Activated T-helper 2 cell treated with anti-CD3 and anti-CD28 coated beads, Interferon-gamma antibody, Interleukin-2, Interleukin-4, amounts not matched to agents 10 μg/mL and 5 μg/mL and 100 μg/mL, durations not matched to agents 14 hours and 24 hours and 36 hours (primary cell): ENCODE measurements at regions of chr1 and their contacts with region 1.

Region 1: DNA sequence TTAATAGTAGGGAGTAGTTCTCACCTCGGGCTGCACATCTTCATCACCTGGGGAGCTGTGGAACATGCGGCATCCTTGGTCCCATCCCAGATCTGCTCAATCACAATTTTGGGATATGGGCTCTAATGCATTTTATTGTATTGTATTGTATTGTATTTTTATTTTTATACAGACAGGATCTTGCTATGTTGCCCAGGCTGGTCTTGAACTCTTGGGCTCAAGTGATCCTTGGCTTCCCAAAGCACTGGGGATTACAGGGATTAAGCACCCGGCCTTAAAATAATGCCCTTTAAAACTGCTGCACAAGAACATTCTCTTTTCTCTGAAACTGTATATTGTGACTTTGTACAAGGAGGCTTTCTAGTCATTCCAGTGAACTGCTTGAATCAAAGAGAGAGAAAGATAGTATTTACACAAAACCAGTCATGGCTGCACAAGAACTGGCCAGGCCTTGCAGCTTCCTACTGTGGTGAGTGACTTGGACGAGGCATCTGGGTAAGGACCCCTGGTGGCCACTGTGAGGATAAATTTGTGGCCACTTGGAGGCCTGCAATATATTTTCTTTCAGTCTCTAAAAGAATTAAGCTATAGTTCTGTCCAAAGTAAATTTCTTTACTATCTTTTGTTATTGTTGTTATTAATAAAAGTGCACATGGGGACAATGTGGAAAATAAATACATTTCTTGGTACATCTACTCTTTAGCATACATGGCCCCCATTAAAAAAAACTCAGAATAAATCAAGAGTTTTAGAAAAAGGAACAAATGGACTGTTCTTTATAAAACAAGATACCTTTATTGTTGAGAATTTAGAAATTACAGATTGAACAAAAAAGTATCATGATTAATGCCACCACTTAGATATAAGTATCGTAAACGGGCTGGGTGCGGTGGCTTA is 48.0 kb downstream of the TBCE start:
- DNase-seq: peak; percentile 38
- H3K4me3 Mint-ChIP-seq: no peak overlapping the region
- H3K27ac Mint-ChIP-seq: no peak overlapping the region
- H3K4me1 Mint-ChIP-seq: peaks cover 6% of the 10 kb centered on the region
- H3K27me3 Mint-ChIP-seq: no peaks in the 10 kb centered on the region

Region 2: GRCh38 chr1:235206533-235207208 is 208.6 kb before region 1 on chr1:
- intact Hi-C with region 1: loop called (anchors 2 kb)
- DNase-seq: no peak
- H3K4me3 Mint-ChIP-seq: peak overlapping the region; percentile 26
- H3K27ac Mint-ChIP-seq: peak overlapping the region; percentile 92
- H3K4me1 Mint-ChIP-seq: peaks cover 28% of the 10 kb centered on the region
- H3K27me3 Mint-ChIP-seq: no peaks in the 10 kb centered on the region

Region 3: GRCh38 chr1:235253219-235253962 is 161.9 kb before region 1 on chr1:
- intact Hi-C with region 1: loop called (anchors 1 kb)
- DNase-seq: peak; percentile 41
- H3K4me3 Mint-ChIP-seq: no peak overlapping the region
- H3K27ac Mint-ChIP-seq: no peak overlapping the region
- H3K4me1 Mint-ChIP-seq: peaks cover 20% of the 10 kb centered on the region
- H3K27me3 Mint-ChIP-seq: no peaks in the 10 kb centered on the region

Region 4: DNA sequence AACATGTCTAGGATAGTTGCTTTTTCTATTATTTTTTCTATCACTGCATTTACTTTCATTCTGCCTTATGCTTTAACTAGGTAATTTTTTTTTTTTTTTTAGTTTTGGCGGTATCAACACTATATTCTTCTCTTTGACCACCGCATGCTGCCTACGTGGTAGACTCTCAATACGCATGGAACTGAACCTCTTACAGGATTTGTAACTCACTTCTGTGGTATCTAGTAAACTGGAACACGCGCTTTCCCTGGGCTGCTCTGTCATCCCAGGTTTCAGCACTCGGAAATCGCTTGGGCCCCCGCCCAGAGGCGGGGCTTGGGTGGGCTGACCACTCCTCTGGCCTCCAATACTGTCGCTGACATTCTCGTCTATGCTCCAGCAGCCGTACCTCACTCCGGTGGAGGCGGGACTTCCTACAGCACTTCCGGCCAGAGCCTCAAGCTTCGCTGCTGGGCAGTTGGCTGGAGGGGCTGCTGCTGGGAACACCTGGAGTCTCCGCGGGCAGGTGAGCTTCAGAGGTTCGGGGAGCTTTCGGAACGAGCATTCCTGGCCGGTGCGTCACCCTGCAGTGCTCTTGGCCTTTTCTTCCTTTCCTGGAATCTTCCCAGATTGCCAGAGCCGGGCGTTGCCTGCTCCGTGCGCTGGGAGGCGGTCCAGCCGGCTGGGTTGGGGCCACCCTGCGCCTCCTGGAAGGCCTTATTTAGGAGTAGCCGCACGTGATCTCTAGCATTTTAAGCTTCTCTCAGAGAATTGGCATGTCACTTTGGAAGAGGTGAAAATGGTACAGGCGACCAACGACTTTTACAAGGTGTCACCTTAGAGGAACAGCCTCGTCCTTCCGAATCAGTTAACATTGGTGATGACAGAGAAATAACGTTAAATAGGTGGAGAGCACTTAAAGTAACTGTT is 48.0 kb before region 1 on chr1 and contains the start of gene TBCE:
- intact Hi-C with region 1: loop called (anchors 5 kb)
- DNase-seq: peak; percentile 85
- H3K4me3 Mint-ChIP-seq: peak within 1 kb of the TSS; percentile 97
- H3K27ac Mint-ChIP-seq: peak within 1 kb of the TSS; percentile 82
- H3K4me1 Mint-ChIP-seq: peaks cover 26% of the 10 kb centered on the region
- H3K27me3 Mint-ChIP-seq: no peaks in the 10 kb centered on the region
- total RNA-seq, gene TBCE: 25.0 and 28.2 TPM in 2 replicates